Common myeloid progenitor, CD34-positive (primary cell): ENCODE measurements at regions of chr17 and their contacts with region 1.

Region 1: DNA sequence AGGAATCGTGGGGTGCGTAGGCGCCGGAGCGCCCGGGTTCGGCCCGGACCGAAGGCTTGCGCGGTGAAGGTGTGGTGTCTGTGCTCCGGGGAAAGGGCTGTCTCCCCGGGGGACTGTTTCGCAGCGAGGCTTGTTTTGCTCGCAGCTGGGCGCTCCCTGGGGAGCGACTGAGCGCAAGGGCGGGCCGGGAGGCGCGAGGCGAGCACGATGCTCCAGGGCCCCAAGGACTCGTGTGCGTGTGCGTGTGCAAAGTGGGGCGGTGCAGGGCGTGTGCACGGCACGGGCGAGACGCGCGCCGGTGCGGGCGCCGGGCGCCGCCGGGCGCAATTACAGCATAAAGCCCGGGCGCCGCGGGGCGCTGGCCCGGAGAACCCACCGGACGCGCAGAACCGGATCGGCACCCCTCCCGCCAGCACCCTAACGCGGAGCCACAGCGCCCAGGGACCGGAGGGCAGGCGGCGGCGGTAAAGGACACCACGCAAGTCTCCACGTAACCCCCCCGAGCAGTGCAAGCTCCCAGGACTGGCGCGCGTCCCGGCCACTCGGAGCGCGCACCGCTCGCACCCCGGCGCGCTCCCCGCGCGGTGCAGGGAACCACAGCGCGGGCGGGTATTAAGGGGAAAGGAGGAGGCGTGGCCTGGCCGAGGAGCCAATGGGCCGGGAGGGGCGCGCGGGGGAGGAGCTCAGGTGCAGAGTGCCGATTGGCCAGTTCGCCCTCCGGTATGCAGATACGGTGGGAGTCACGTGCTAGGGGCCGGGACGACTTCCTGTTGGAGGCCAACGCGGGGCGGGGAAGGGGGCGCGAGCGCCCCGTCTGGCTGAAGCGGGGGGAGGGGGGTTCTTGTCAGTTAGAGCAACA is at the start of gene TNRC6C:
- DNase-seq: peak; percentile 99 to 100 (median 99)
- H3K4me3 ChIP-seq: peak within 1 kb of the TSS; percentile 70 to 96 (median 78)
- H3K27ac ChIP-seq: peak within 1 kb of the TSS in 1 of 2 experiments; percentile 8
- H3K4me1 ChIP-seq: peaks cover 17 to 26% (median 22%) of the 10 kb centered on the region in 4 experiments
- H3K27me3 ChIP-seq: peaks cover 4 to 23% (median 19%) of the 10 kb centered on the region in 5 experiments

Region 2: GRCh38 chr17:77881545-77881944 is 76.5 kb before region 1 on chr17:
- CTCF ChIA-PET with region 1: interaction called, 3 read pairs
- POLR2A ChIA-PET with region 1: interaction called, 16 read pairs
- DNase-seq: peak; percentile 88 to 98 (median 98)
- H3K4me3 ChIP-seq: peak overlapping the region in 5 of 7 experiments; percentile 8 to 56 (median 37)
- H3K27ac ChIP-seq: peak overlapping the region in 1 of 2 experiments; percentile 62
- H3K4me1 ChIP-seq: peaks cover 10 to 39% (median 38%) of the 10 kb centered on the region in 4 experiments
- H3K27me3 ChIP-seq: peaks cover 0 to 6% (median 5%) of the 10 kb centered on the region in 5 experiments

Region 3: GRCh38 chr17:78250891-78251794 is 293.1 kb after region 1 on chr17:
- CTCF ChIA-PET with region 1: no interaction called
- POLR2A ChIA-PET with region 1: no interaction called
- DNase-seq: peak; percentile 84 to 89 (median 86)
- H3K4me3 ChIP-seq: peak overlapping the region in 3 of 7 experiments; percentile 42 to 64 (median 43)
- H3K27ac ChIP-seq: no peak overlapping the region
- H3K4me1 ChIP-seq: peaks cover 8 to 67% (median 59%) of the 10 kb centered on the region in 4 experiments
- H3K27me3 ChIP-seq: no peaks in the 10 kb centered on the region